A549 (cell line): ENCODE measurements at regions of chr4 and their contacts with region 1.

Region 1: DNA sequence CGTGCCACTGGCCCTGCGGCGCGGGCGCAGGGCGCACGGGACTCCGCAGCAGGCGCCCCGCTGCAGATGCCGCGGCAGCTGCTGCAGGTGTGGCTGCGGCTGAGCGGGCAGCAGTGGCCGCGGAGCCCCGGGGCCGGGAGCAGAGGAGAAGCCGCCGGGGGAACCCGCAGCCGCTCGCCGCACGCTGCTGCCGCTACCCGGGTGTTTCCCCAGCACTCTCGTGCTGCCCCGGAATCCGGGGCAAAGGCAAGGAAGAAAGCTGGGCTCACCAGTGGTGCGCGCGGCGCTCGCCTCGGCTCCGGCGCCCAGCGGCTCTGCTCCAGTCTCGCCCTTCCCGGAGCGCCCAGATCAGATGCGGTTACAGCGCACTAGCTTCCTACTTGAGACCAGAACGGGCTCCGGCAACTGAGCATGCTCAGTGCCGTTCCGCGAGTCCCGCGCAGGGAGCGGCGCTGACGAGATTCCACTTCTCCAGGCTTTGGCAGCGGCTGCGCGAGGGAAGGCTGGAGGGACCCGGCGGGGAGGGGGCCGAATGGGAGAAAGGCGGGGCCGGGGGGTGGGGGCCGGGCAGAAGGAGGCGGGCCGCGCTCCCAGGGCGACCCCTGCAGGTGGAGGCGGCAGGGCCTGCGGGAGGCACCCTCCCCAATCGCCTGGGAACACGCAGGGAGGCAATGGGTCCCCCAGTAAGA is at the start of gene APBB2:
- DNase-seq: peak; percentile 86 to 95
- ATAC-seq: peak; percentile 80 to 90
- H3K4me3 ChIP-seq: peak within 1 kb of the TSS; percentile 93
- H3K27ac ChIP-seq: peak within 1 kb of the TSS; percentile 93 to 95
- H3K4me1 ChIP-seq: peaks cover 23% of the 10 kb centered on the region; the same call in 2 of the 3 replicates
- CTCF ChIP-seq: peak; percentile 77
- EP300 ChIP-seq: no peak
- POLR2A ChIP-seq: peak; percentile 76
- RAD21 ChIP-seq: peak; percentile 57 to 96
- polyA plus RNA-seq, gene APBB2: 31.3 and 31.9 TPM in 2 replicates

Region 2: DNA sequence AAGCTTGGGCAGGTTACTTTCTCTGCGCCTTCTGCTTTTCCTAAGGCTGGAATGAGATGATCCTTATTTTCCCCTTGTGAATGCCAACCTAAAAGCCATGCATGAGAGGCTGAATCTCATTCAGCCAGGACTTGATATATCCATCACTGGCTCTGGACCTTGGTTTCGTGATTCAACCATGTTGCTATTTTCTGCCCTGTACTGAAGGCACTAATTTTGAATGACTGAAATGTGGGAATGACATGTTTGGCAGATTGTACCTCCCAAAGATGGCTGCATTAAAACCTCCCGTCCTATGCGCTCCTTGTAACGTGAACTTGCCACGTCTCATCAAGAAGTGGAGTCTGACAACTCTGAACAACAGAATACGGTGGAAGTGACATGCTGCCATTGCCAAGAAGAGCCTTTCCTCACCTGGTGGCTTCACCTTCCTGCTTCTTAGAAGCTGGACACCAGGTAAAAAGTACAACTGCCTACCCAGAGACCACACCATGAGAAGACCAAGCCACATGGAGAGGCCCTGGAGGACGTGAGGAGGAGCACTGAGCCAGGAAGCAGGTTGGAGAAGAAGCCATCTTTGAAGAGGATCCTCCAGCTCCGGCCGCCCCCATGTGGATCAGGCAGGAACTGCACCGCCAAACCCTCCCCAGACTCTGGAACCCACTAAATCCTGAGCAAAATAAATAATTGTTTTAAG is 290.0 kb before region 1 on chr4:
- CTCF ChIA-PET with region 1: interaction called, 135 read pairs
- POLR2A ChIA-PET with region 1: interaction called, 4 read pairs
- DNase-seq: peak; percentile 38 to 58
- ATAC-seq: peak; percentile 80 to 88; a peak in 4 of 6 replicates
- H3K4me3 ChIP-seq: no peak overlapping the region
- H3K27ac ChIP-seq: 0 out of 6 replicates have a peak overlapping the region, but pooled peaks of 1 of the 2 experiments have one; percentile 24
- H3K4me1 ChIP-seq: no peaks in the 10 kb centered on the region
- CTCF ChIP-seq: peak; percentile 52
- EP300 ChIP-seq: no peak
- POLR2A ChIP-seq: no peak
- RAD21 ChIP-seq: peak; percentile 29 to 51; a peak in 3 of 5 replicates

Region 3: GRCh38 chr4:40992472-40993295 is 221.6 kb before region 1 on chr4:
- CTCF ChIA-PET with region 1: interaction called, 10 read pairs
- POLR2A ChIA-PET with region 1: interaction called, 6 read pairs
- DNase-seq: peak in 1 of 2 experiments; percentile 34
- ATAC-seq: no peak
- H3K4me3 ChIP-seq: no peak overlapping the region
- H3K27ac ChIP-seq: peak overlapping the region; percentile 78 to 89
- H3K4me1 ChIP-seq: peaks cover 68% of the 10 kb centered on the region
- CTCF ChIP-seq: no peak
- EP300 ChIP-seq: no peak
- POLR2A ChIP-seq: no peak
- RAD21 ChIP-seq: no peak

Region 4: GRCh38 chr4:41177016-41177415 is 37.3 kb before region 1 on chr4:
- CTCF ChIA-PET with region 1: interaction called, 11 read pairs
- POLR2A ChIA-PET with region 1: interaction called, 3 read pairs
- DNase-seq: peak in 1 of 2 experiments; percentile 16
- ATAC-seq: peak; percentile 64 to 87; a peak in 4 of 6 replicates
- H3K4me3 ChIP-seq: no peak overlapping the region
- H3K27ac ChIP-seq: peak overlapping the region; percentile 47 to 77; a peak in 5 of 6 replicates
- H3K4me1 ChIP-seq: peaks cover 45% of the 10 kb centered on the region
- CTCF ChIP-seq: no peak
- EP300 ChIP-seq: no peak
- POLR2A ChIP-seq: no peak
- RAD21 ChIP-seq: peak in 1 of 2 experiments; percentile 31; a peak in 1 of 5 replicates